Aorta (tissue), 5 donors: ENCODE measurements at regions of chr15 and their contacts with region 1.

Region 1: DNA sequence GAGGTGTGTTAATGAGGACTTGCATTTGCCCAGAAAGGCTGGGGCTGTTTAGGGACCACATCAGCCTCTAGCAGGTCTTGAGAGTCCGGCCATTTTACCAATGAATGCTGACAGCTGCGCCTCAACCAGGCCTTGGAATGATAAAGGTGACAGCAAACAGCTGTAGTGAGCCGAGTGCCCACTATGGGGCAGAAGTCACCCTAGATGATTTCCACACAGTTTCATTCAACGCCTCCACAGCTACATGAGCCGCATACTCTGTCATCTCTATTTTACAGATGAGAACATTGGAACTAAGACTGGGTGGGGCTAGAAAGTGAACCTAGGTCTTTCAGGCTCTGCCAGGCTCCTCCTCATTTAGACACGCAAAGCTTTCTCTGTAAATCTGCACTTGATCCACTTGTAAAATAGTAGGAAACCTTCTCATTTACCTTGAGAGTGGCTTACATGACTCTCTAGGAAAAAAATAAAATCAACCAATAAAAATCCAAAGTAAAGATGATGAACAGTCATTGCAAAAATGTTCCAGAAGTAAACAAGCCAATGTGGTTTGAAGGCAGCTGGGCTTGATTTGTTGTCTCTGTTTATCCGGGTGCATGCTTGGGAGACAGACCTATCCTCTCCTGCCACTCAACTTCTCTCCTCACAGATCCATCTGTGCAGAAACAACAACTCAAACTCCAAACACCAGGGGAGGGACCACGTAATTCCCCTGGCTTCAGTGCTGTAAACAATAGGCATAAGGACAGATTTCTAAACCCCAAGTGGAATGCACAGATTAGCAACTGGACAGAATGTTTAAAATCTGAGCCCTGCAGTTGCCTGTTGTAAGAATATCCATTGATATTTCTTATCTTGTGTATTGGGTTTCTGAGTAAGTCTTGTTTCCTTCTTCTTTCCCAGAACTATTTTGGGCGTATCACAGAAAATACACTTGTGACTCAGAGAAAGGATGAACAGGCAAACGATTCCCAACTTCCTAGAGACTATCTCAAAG is 31.5 kb upstream of the LDHAL6B start:
- DNase-seq: peak in 1 of 2 donors; percentile 68
- ATAC-seq: peak; percentile 59
- H3K4me3 ChIP-seq: no peak overlapping the region
- H3K27ac ChIP-seq: no peak overlapping the region
- H3K4me1 ChIP-seq: peaks cover 0 to 5% of the 10 kb centered on the region in 2 donors
- H3K27me3 ChIP-seq: no peaks in the 10 kb centered on the region

Region 2: GRCh38 chr15:59099162-59099685 is 75.9 kb before region 1 on chr15:
- intact Hi-C with region 1: no loop called
- DNase-seq: no peak
- ATAC-seq: no peak
- H3K4me3 ChIP-seq: no peak overlapping the region
- H3K27ac ChIP-seq: no peak overlapping the region
- H3K4me1 ChIP-seq: no peaks in the 10 kb centered on the region
- H3K27me3 ChIP-seq: no peaks in the 10 kb centered on the region

Region 3: GRCh38 chr15:59268168-59268979 is 93.2 kb after region 1 on chr15:
- intact Hi-C with region 1: no loop called
- DNase-seq: no peak
- ATAC-seq: no peak
- H3K4me3 ChIP-seq: no peak overlapping the region
- H3K27ac ChIP-seq: no peak overlapping the region
- H3K4me1 ChIP-seq: no peaks in the 10 kb centered on the region
- H3K27me3 ChIP-seq: no peaks in the 10 kb centered on the region

Region 4: GRCh38 chr15:59313641-59314332 is 138.7 kb after region 1 on chr15:
- intact Hi-C with region 1: loop called in 1 of 2 experiments (anchors 5 kb)
- DNase-seq: peak; percentile 94 to 96
- ATAC-seq: peak; percentile 89
- H3K4me3 ChIP-seq: no peak overlapping the region
- H3K27ac ChIP-seq: peak overlapping the region; percentile 91 to 96
- H3K4me1 ChIP-seq: peaks cover 8 to 17% of the 10 kb centered on the region in 2 donors
- H3K27me3 ChIP-seq: no peaks in the 10 kb centered on the region

Region 5: DNA sequence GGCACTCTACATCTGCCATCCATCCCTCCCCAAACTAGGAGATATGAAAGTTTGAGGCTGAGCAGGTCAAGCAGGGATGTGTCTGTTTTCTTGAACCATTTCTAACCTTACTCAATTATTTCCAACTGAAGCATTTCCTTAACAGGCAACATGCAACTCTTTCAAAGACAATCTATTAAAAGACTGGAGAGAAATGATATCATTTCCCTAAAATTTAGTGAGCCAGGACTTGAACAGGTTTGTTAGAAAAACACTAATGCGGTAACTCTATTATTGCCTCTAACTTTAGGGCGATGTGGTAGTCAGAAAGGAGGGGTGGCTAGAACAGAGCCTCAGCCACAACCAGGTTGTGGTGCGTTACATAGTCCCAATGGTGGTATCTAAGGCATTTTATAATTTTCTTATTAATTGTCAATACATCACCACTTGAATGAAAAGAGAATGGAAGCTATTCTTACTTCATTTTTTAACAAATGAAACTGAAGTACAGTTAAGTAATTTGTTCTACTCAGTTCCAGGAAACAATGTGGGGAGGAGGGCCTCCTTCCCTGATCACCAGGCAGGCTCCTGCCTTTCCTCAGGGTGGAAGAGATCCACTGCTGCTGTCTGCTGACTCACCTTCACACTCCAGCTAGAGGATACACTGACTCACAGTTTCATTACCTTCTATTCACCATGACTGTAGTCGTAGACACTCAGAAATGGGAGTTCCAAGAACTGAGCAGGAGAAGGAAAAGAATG is 174.7 kb after region 1 on chr15:
- intact Hi-C with region 1: no loop called
- DNase-seq: no peak
- ATAC-seq: peak; percentile 73
- H3K4me3 ChIP-seq: no peak overlapping the region
- H3K27ac ChIP-seq: peak overlapping the region in 1 of 2 donors; percentile 68
- H3K4me1 ChIP-seq: peaks cover 6 to 10% of the 10 kb centered on the region in 2 donors
- H3K27me3 ChIP-seq: no peaks in the 10 kb centered on the region